H1 (cell line): ENCODE measurements at regions of chr12 and their contacts with region 1.

Region 1: GRCh38 chr12:125371033-125371432 is 305.8 kb downstream of the AACS start:
- DNase-seq: no peak
- H3K4me3 ChIP-seq: no peak overlapping the region
- H3K27ac ChIP-seq: no peak overlapping the region
- H3K4me1 ChIP-seq: peaks cover 0 to 3% (median 2%) of the 10 kb centered on the region in 4 experiments; a peak in 2 of 7 replicates
- H3K27me3 ChIP-seq: no peaks in the 10 kb centered on the region
- CTCF ChIP-seq: no peak
- EP300 ChIP-seq: no peak
- POLR2A ChIP-seq: no peak
- RAD21 ChIP-seq: no peak

Region 2: DNA sequence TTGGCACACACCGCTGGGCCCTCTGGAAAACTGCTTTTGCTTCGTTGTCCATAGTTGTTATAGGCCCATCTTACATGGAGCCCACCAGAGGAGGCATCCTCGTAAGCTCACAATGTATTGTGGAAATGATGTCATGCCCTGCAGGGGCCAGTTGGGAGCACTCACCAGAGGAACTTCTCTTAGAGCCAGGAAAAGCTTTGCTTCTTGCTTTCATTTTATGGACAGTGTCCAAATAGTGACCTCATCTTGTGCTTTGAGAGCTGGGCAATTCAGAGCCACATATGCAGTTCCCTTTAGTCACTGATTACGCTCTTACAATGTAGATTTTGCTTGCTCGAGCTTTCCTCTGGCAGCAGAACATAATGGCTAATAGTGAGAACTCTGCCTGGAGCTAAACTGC is 30.2 kb before region 1 on chr12:
- CTCF ChIA-PET with region 1: interaction called, 13 read pairs
- POLR2A ChIA-PET with region 1: no interaction called
- DNase-seq: no peak
- H3K4me3 ChIP-seq: no peak overlapping the region
- H3K27ac ChIP-seq: no peak overlapping the region
- H3K4me1 ChIP-seq: peaks cover 0 to 11% (median 5%) of the 10 kb centered on the region in 4 experiments; a peak in 4 of 7 replicates
- H3K27me3 ChIP-seq: no peaks in the 10 kb centered on the region
- CTCF ChIP-seq: no peak
- EP300 ChIP-seq: no peak
- POLR2A ChIP-seq: no peak
- RAD21 ChIP-seq: no peak

Region 3: DNA sequence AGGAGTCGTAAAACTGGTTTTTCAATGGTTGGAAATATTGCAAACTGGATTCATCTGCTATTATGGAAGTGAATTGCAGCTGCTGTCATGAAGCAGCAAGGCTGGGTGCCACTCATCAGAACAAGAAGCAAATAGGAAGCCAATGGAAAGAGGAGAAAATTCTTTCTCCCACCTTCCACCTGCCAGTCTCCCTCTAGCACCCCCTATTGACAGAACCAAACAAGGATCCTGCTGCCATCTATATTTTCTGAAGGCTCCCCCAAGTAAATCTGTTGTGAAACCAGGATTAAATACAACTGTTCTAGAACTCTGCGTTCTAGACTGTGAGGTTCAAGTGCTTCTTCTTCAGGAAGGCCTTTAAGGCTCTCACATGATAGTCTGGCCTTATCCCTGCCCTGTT is 19.2 kb before region 1 on chr12:
- CTCF ChIA-PET with region 1: interaction called, 24 read pairs
- POLR2A ChIA-PET with region 1: no interaction called
- DNase-seq: peak in 1 of 2 experiments; percentile 33
- H3K4me3 ChIP-seq: no peak overlapping the region
- H3K27ac ChIP-seq: no peak overlapping the region
- H3K4me1 ChIP-seq: peaks cover 0 to 8% (median 2%) of the 10 kb centered on the region in 4 experiments; a peak in 4 of 7 replicates
- H3K27me3 ChIP-seq: no peaks in the 10 kb centered on the region
- CTCF ChIP-seq: peak in 2 of 3 experiments; percentile 9 to 48; a peak in 2 of 4 replicates
- EP300 ChIP-seq: no peak
- POLR2A ChIP-seq: no peak
- RAD21 ChIP-seq: no peak; a peak in 1 of 4 replicates